ENCODE measurements at regions of chr2 and their contacts with region 1.

Region 1: DNA sequence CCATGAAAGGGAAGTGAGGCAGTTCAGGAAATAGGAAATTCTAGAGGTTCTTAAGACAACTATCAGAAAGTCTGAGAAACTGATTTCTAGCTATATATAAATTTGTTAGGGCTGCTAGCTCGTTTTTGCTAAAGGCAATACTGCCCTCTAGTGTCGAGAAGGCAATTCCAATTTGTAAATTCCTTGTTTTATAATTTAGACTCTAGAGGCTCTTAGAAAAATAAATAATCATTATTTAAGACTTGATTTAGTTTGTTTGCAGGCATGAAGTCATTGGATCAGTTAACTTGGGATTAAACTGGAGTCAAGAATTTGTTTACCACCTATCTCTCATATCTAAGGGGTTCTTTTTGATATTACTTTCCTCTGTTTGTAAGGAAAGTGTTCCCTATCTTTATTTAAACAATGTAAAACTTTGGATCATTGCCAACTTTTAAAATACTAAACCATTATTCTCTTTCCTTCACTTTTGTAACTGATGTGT is 66.2 kb downstream of the ACVR2A start:
- DNase-seq: no peak
- CTCF ChIP-seq: peak; percentile 27

Region 2: GRCh38 chr2:146734042-146734820 is 1176.8 kb before region 1 on chr2:
- in situ Hi-C with region 1: loop called (anchors 25 kb)
- DNase-seq: peak; percentile 12
- CTCF ChIP-seq: peak; percentile 6

Region 3: DNA sequence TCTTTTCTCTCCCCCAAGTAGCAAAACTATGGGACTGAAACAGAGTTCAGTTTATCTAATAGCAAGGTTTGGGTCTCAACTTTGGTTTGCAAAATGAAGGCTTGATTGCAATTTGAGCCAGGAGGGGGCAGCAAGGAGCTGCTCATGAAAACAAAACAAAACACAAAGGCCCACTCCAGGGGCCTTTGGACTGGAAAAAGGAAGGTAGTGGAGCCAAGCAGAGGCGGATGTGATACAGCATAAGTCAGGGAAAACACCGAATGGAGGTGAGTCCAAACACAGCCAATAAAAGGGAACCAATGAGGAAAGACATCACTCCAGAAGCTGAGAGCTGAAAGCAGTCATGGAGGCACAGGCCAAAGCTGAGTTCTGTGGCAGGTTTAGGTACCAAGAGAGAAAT is 865.9 kb before region 1 on chr2:
- in situ Hi-C with region 1: loop called (anchors 10 kb)
- DNase-seq: peak; percentile 27
- CTCF ChIP-seq: peak; percentile 50

Region 4: GRCh38 chr2:147331790-147332419 is 579.1 kb before region 1 on chr2:
- in situ Hi-C with region 1: loop called (anchors 10 kb)
- DNase-seq: peak; percentile 7
- CTCF ChIP-seq: peak; percentile 39

Measured in GM13976 (cell line).